ENCODE measurements at regions of chr1 and their contacts with region 1.

Region 1: GRCh38 chr1:116168277-116169097 is 57.3 kb downstream of the MAB21L3 start:
- H3K4me3 Mint-ChIP-seq: peak overlapping the region; percentile 79
- H3K27ac Mint-ChIP-seq: peak overlapping the region; percentile 67
- H3K4me1 Mint-ChIP-seq: peaks cover 35% of the 10 kb centered on the region
- H3K27me3 Mint-ChIP-seq: peaks cover 30% of the 10 kb centered on the region

Region 2: GRCh38 chr1:116151739-116152576 is 16.5 kb before region 1 on chr1:
- intact Hi-C with region 1: loop called (anchors 2 kb)
- H3K4me3 Mint-ChIP-seq: peak overlapping the region; percentile 61
- H3K27ac Mint-ChIP-seq: peak overlapping the region; percentile 62
- H3K4me1 Mint-ChIP-seq: peaks cover 6% of the 10 kb centered on the region
- H3K27me3 Mint-ChIP-seq: peaks cover 16% of the 10 kb centered on the region

Region 3: GRCh38 chr1:116377541-116378529 is 209.3 kb after region 1 on chr1:
- intact Hi-C with region 1: loop called (anchors 5 kb)
- H3K4me3 Mint-ChIP-seq: peak overlapping the region; percentile 43
- H3K27ac Mint-ChIP-seq: peak overlapping the region; percentile 63
- H3K4me1 Mint-ChIP-seq: peaks cover 67% of the 10 kb centered on the region
- H3K27me3 Mint-ChIP-seq: no peaks in the 10 kb centered on the region